IMR-90 (cell line): ENCODE measurements at regions of chr6 and their contacts with region 1.

Region 1: GRCh38 chr6:71190809-71191208 is 97.8 kb upstream of the OGFRL1 start:
- DNase-seq: peak; percentile 52
- ATAC-seq: no peak
- H3K4me3 ChIP-seq: no peak overlapping the region
- H3K27ac ChIP-seq: no peak overlapping the region
- H3K4me1 ChIP-seq: peaks cover 2% of the 10 kb centered on the region; the same call in 1 of the 2 replicates
- H3K27me3 ChIP-seq: no peaks in the 10 kb centered on the region
- CTCF ChIP-seq: peak; percentile 67
- POLR2A ChIP-seq: no peak
- RAD21 ChIP-seq: peak; percentile 77

Region 2: DNA sequence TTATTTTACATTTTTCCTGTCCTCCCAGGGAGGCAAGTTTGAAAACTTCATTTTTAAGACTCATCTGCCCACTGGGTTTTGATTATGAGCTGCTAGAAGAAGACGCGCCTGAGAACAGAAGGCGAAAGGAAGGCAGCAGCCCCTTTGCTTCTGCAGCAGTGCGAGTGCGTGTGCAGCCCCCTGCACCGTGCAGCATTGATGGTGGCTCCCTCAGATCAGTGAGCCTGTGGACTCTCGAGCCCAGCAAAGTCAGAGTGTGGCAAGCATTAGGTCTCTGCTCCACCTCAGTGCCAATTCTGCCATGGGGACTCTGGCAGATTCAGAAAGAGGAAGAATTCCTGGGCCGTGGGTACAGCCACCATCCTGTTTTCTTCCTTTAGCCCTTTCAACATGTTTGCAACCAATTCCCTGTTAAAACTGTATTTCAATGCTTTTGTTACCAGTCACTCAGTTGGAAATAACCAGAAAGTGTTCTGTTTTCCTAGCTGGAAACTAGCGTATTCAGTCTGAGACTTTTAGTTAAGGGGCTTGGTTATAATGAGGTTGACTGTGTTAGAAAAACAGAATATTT is 37.0 kb before region 1 on chr6:
- CTCF ChIA-PET with region 1: no interaction called
- POLR2A ChIA-PET with region 1: no interaction called
- dilution Hi-C with region 1: no loop called
- in situ Hi-C with region 1: no loop called
- intact Hi-C with region 1: no loop called
- DNase-seq: no peak
- ATAC-seq: no peak
- H3K4me3 ChIP-seq: no peak overlapping the region
- H3K27ac ChIP-seq: no peak overlapping the region
- H3K4me1 ChIP-seq: no peaks in the 10 kb centered on the region
- H3K27me3 ChIP-seq: peaks cover 4% of the 10 kb centered on the region
- CTCF ChIP-seq: no peak
- POLR2A ChIP-seq: no peak
- RAD21 ChIP-seq: no peak

Region 3: DNA sequence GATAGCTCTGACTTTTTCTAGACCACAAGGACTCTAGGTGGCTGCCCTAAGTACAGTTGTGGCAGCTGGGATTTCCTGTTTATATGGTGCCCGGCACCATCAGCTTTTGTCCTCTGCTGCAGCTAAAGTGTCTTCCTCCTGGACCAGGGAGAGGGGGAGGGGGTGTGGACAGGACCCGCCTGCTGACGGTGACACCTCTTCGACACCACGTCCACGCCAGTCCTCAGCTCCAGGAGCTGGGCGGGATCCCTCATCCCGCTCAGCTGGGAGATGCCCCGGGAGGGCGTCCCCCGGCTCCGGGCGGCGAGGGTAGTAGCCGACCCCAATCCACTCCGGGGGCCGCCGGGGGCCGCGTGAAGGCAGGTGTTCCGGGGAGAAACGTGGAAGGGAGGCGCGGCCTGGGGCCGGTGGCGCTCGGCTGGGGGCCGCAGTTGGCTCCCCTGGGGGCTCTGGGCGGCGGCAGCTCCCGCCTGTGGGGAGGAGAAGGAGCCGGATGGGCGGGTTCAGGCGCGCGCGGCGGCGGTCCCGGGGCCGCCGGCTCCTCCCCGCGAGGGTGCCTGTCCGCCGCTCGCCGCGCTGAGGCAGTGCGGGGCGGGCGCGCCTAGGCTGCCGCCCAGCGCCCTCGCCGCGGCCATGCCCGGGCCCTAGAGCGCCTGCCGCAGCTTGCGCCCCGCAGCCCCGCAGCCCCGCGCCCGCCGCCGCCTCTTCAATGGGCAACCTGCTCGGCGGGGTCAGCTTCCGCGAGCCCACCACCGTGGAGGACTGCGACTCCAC is 97.6 kb after region 1 on chr6 and contains the start of gene OGFRL1:
- CTCF ChIA-PET with region 1: interaction called, 3 read pairs
- POLR2A ChIA-PET with region 1: no interaction called
- dilution Hi-C with region 1: no loop called
- in situ Hi-C with region 1: loop called (anchors 10 kb)
- intact Hi-C with region 1: loop called (anchors 2 kb)
- DNase-seq: peak; percentile 53
- ATAC-seq: peak; percentile 97
- H3K4me3 ChIP-seq: peak within 1 kb of the TSS; percentile 99
- H3K27ac ChIP-seq: peak within 1 kb of the TSS; percentile 75
- H3K4me1 ChIP-seq: peaks cover 6% of the 10 kb centered on the region
- H3K27me3 ChIP-seq: no peaks in the 10 kb centered on the region
- CTCF ChIP-seq: peak; percentile 38; the same call in 1 of the 2 replicates
- POLR2A ChIP-seq: peak; percentile 78
- RAD21 ChIP-seq: no peak
- total RNA-seq, gene OGFRL1: 5.7 and 14.4 TPM in 2 replicates

Region 4: DNA sequence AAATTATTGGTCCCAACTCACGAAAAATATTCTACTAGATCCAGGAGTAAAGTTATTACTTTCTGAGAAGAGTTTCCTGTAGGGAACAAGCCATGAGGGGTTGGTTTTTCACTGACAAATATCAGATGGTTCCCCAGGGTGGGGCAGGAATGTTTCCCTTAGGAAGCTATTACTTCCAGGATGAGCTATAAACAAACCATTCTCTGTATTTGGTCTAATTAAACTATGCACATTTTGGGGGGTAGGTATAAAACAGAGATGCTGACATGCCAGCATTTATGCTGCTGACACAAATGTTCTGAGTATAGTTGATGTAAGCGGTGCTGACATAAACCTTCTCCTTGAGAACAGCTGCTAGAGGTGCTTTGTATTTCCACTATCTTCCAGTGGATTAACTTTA is 152.0 kb after region 1 on chr6:
- CTCF ChIA-PET with region 1: interaction called, 4 read pairs
- POLR2A ChIA-PET with region 1: no interaction called
- dilution Hi-C with region 1: no loop called
- in situ Hi-C with region 1: loop called (anchors 5 kb)
- intact Hi-C with region 1: no loop called
- DNase-seq: no peak
- ATAC-seq: peak; percentile 46
- H3K4me3 ChIP-seq: no peak overlapping the region
- H3K27ac ChIP-seq: no peak overlapping the region
- H3K4me1 ChIP-seq: peaks cover 1% of the 10 kb centered on the region; the same call in 1 of the 2 replicates
- H3K27me3 ChIP-seq: no peaks in the 10 kb centered on the region
- CTCF ChIP-seq: no peak
- POLR2A ChIP-seq: no peak
- RAD21 ChIP-seq: no peak

Region 5: DNA sequence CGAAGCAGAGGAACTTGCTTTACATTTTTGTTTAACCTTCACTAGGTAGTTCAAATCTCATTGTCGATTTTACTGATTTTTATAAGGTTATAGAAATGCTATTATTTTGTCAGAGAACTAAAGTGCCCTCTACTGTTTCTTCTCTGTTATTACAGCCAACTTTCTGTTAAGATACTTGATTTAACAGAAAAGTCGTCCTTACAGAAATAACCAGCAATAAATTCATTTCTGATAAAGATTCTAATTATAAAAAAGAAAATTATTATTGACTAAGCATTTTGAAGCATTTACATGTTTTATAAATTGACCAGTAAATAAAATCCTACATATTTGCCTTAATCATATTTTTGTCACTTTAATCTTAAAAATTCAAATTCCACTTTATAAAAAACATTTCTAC is 158.6 kb after region 1 on chr6:
- CTCF ChIA-PET with region 1: interaction called, 4 read pairs
- POLR2A ChIA-PET with region 1: no interaction called
- dilution Hi-C with region 1: loop called (anchors 25 kb)
- in situ Hi-C with region 1: loop called (anchors 5 kb)
- intact Hi-C with region 1: loop called (anchors 1 kb)
- DNase-seq: peak; percentile 62
- ATAC-seq: peak; percentile 65
- H3K4me3 ChIP-seq: no peak overlapping the region
- H3K27ac ChIP-seq: no peak overlapping the region
- H3K4me1 ChIP-seq: peaks cover 7% of the 10 kb centered on the region
- H3K27me3 ChIP-seq: no peaks in the 10 kb centered on the region
- CTCF ChIP-seq: peak; percentile 80
- POLR2A ChIP-seq: no peak
- RAD21 ChIP-seq: peak; percentile 73

Region 6: GRCh38 chr6:71510057-71510713 is 319.4 kb after region 1 on chr6:
- CTCF ChIA-PET with region 1: interaction called, 8 read pairs
- POLR2A ChIA-PET with region 1: no interaction called
- dilution Hi-C with region 1: no loop called
- in situ Hi-C with region 1: loop called (anchors 10 kb)
- intact Hi-C with region 1: loop called (anchors 1 kb)
- DNase-seq: peak; percentile 84
- ATAC-seq: peak; percentile 86
- H3K4me3 ChIP-seq: no peak overlapping the region
- H3K27ac ChIP-seq: no peak overlapping the region
- H3K4me1 ChIP-seq: peaks cover 8% of the 10 kb centered on the region
- H3K27me3 ChIP-seq: no peaks in the 10 kb centered on the region
- CTCF ChIP-seq: peak; percentile 94
- POLR2A ChIP-seq: no peak
- RAD21 ChIP-seq: peak; percentile 96

Region 7: DNA sequence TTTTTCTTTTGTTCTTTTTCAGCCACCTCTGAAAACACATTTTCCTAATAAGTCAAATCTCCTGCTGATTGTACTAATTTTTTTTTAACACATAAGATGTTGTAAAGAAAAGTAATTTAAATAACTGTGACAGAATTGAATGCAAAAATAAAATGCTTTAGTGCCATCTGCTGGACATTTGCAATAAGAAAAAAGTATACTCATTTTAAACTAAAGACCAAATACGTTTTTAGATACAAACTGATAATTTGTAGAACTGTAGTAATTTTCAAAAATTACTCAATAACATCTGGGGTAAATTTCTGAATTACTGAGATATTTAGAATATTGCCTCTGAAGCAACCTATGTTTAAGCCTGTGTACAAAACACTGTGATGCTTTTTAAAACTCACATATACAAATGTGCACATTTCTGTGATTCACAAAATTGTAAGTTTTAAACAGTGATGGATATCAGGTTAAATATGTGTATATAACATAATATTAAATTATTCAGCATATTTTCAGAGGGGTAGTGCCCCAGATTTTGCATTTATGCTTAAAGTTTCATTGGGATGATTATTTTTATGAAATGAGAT is 894.3 kb after region 1 on chr6:
- CTCF ChIA-PET with region 1: no interaction called
- POLR2A ChIA-PET with region 1: no interaction called
- dilution Hi-C with region 1: no loop called
- in situ Hi-C with region 1: loop called (anchors 25 kb)
- intact Hi-C with region 1: no loop called
- DNase-seq: peak; percentile 18
- ATAC-seq: no peak
- H3K4me3 ChIP-seq: no peak overlapping the region
- H3K27ac ChIP-seq: no peak overlapping the region
- H3K4me1 ChIP-seq: no peaks in the 10 kb centered on the region
- H3K27me3 ChIP-seq: peaks cover 2% of the 10 kb centered on the region; the same call in 1 of the 2 replicates
- CTCF ChIP-seq: peak; percentile 57
- POLR2A ChIP-seq: no peak
- RAD21 ChIP-seq: peak; percentile 55